ENCODE measurements at regions of chr6 and their contacts with region 1.

Region 1: DNA sequence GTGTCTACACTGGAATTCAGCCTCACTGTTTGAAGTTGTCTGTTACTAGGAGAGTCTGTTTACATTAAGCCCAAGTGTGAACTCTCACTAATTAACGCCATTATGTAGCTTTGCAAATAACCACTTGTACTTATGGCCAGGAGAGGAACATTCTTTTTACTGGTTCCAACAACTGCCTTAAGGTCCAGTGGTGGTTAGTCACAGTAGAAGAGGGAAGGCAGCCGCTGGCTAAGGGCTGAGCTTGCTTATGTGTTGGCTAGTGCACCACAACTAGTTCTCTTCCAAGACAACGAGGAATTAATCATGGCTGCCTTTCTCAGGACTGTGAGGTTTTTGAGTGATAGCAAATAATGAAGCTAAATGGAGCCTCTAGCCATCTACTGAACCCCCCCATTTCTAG is 14.9 kb upstream of the SLC22A23 start:
- DNase-seq: no peak
- H3K4me3 ChIP-seq: no peak overlapping the region
- CTCF ChIP-seq: no peak

Region 2: GRCh38 chr6:3518356-3519225 is 46.9 kb after region 1 on chr6:
- CTCF ChIA-PET with region 1: no interaction called
- POLR2A ChIA-PET with region 1: interaction called, 12 read pairs
- DNase-seq: no peak
- H3K4me3 ChIP-seq: no peak overlapping the region
- CTCF ChIP-seq: no peak